Caco-2 (cell line): ENCODE measurements at regions of chr11 and their contacts with region 1.

Region 1: GRCh38 chr11:125724125-125724524 is 22.0 kb upstream of the PATE1 start:
- DNase-seq: peak in 1 of 2 experiments; percentile 29
- H3K4me3 ChIP-seq: no peak overlapping the region
- H3K4me3 Mint-ChIP-seq: no peak overlapping the region
- H3K27ac Mint-ChIP-seq: no peak overlapping the region
- H3K4me1 ChIP-seq: no peaks in the 10 kb centered on the region
- H3K4me1 Mint-ChIP-seq: no peaks in the 10 kb centered on the region
- H3K27me3 ChIP-seq: no peaks in the 10 kb centered on the region; the same call in none of the 2 replicates
- H3K27me3 Mint-ChIP-seq: peaks cover 22% of the 10 kb centered on the region
- CTCF ChIP-seq: peak; percentile 41

Region 2: GRCh38 chr11:125869521-125869920 is 145.4 kb after region 1 on chr11:
- CTCF ChIA-PET with region 1: interaction called, 3 read pairs
- POLR2A ChIA-PET with region 1: no interaction called
- intact Hi-C with region 1: loop called (anchors 1 kb)
- DNase-seq: no peak
- H3K4me3 ChIP-seq: no peak overlapping the region
- H3K4me3 Mint-ChIP-seq: no peak overlapping the region
- H3K27ac Mint-ChIP-seq: no peak overlapping the region
- H3K4me1 ChIP-seq: no peaks in the 10 kb centered on the region
- H3K4me1 Mint-ChIP-seq: peaks cover 7% of the 10 kb centered on the region
- H3K27me3 ChIP-seq: no peaks in the 10 kb centered on the region
- H3K27me3 Mint-ChIP-seq: no peaks in the 10 kb centered on the region
- CTCF ChIP-seq: no peak